CD8-positive, alpha-beta T cell (primary cell): ENCODE measurements at regions of chr20 and their contacts with region 1.

Region 1: GRCh38 chr20:62386383-62387218 is at the start of gene RPS21:
- DNase-seq: peak; percentile 86 to 97 (median 94)
- ATAC-seq: peak; percentile 88
- H3K4me3 ChIP-seq: peak within 1 kb of the TSS; percentile 93 to 96
- H3K4me3 Mint-ChIP-seq: peak within 1 kb of the TSS; percentile 91
- H3K27ac ChIP-seq: peak within 1 kb of the TSS; percentile 96 to 98
- H3K27ac Mint-ChIP-seq: peak within 1 kb of the TSS; percentile 95
- H3K4me1 ChIP-seq: peaks cover 37% of the 10 kb centered on the region
- H3K4me1 Mint-ChIP-seq: peaks cover 44% of the 10 kb centered on the region
- H3K27me3 ChIP-seq: no peaks in the 10 kb centered on the region
- H3K27me3 Mint-ChIP-seq: no peaks in the 10 kb centered on the region
- CTCF ChIP-seq: no peak
- total RNA-seq, gene RPS21: 3,441 to 3,445 TPM

Region 2: DNA sequence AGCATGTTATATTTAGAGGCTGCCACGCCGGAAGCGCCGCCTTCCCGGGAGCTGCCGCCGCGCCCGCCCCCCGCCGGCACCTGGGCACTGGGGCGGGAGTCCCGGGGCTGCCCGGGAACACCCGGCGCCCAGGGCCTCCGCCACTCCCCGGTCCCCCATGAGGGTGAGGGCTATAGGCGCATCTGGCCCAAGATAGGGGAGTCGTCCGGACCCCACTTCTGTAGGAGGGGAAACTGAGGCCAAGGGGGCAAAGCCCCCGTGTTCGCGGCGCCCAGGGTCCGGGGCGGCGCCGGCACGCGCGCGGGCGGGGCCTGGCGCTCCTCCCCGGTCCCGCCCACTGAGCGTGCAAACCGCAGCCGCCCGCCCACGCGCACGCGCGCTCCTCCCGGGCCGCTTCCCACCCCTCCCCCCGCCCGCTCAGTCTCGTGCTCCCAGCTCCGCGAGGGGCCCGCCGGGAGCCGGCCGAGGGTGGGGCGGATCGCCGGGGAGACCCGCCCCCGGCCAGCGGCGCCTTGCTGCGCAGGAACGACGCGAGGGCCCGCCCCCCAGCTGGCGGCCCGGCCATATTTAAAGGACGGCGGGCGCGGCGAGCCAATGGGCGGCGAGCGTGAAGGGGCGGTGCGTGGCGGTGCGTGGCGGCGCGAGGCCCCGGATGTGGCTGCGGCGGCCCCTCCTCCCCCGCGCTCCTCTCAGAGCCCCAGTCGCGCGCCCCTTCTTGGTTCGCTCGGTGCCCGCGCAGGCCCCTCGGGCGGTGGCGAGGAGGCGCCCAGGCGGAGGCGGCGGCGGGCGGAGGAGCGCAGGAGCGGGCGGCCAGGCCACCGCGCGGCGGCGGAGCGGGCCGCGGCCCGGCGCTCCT is 264.6 kb before region 1 on chr20 and contains the start of gene LSM14B:
- CTCF ChIA-PET with region 1: no interaction called
- POLR2A ChIA-PET with region 1: no interaction called
- intact Hi-C with region 1: loop called in 1 of 2 experiments (anchors 5 kb)
- DNase-seq: peak; percentile 92 to 99 (median 94)
- ATAC-seq: peak; percentile 76
- H3K4me3 ChIP-seq: peak within 1 kb of the TSS; percentile 55 to 86
- H3K4me3 Mint-ChIP-seq: peak within 1 kb of the TSS; percentile 85
- H3K27ac ChIP-seq: peak within 1 kb of the TSS; percentile 78 to 83
- H3K27ac Mint-ChIP-seq: peak within 1 kb of the TSS; percentile 90
- H3K4me1 ChIP-seq: peaks cover 57% of the 10 kb centered on the region
- H3K4me1 Mint-ChIP-seq: peaks cover 62% of the 10 kb centered on the region
- H3K27me3 ChIP-seq: no peaks in the 10 kb centered on the region
- H3K27me3 Mint-ChIP-seq: no peaks in the 10 kb centered on the region
- CTCF ChIP-seq: no peak
- total RNA-seq, gene LSM14B: 58.2 to 64.6 TPM

Region 3: GRCh38 chr20:62237801-62238571 is 148.6 kb before region 1 on chr20 and contains the start of gene OSBPL2:
- CTCF ChIA-PET with region 1: no interaction called
- POLR2A ChIA-PET with region 1: no interaction called
- intact Hi-C with region 1: loop called in 1 of 2 experiments (anchors 1 kb)
- DNase-seq: peak; percentile 100
- ATAC-seq: peak; percentile 98
- H3K4me3 ChIP-seq: peak within 1 kb of the TSS; percentile 54 to 58
- H3K4me3 Mint-ChIP-seq: peak within 1 kb of the TSS; percentile 84
- H3K27ac ChIP-seq: peak within 1 kb of the TSS; percentile 65 to 70
- H3K27ac Mint-ChIP-seq: peak within 1 kb of the TSS; percentile 95
- H3K4me1 ChIP-seq: peaks cover 24% of the 10 kb centered on the region
- H3K4me1 Mint-ChIP-seq: peaks cover 41% of the 10 kb centered on the region
- H3K27me3 ChIP-seq: no peaks in the 10 kb centered on the region
- H3K27me3 Mint-ChIP-seq: peaks cover 9% of the 10 kb centered on the region
- CTCF ChIP-seq: no peak
- total RNA-seq, gene OSBPL2: 63.6 to 64.2 TPM

Region 4: DNA sequence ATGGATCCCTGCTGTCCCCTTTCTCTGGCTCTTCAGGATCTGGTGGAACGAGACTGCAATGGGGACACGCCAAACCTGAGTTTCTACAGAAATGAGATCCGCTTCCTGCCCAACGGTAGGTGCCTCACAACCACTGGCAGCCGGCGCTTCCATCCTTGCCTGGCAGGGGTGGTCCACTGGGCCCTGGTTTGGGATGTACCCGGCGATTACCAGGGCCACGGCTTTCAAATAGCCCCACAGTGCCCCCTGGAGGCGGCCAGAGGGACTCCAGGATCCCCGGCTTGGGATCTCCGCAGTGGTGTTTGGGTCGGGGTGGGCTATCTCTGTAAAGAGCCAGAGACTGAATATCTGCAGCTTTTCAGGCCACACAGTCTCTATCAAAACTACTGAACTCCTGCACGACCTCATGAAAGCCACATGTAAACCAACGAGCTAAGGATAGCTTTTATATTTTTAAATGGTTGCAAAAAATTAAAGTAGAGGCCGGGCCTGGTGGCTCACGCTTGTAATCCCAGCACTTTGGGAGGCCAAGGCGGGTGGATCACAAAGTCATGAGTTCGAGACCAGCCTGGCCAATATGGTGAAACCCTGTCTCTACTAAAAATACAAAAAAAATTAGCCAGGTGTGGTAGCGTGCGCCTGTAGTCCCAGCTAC is 421.7 kb after region 1 on chr20:
- CTCF ChIA-PET with region 1: no interaction called
- POLR2A ChIA-PET with region 1: interaction called, 3 read pairs
- intact Hi-C with region 1: loop called in 1 of 2 experiments (anchors 5 kb)
- DNase-seq: peak; percentile 58 to 87 (median 78)
- ATAC-seq: peak; percentile 49
- H3K4me3 ChIP-seq: no peak overlapping the region
- H3K4me3 Mint-ChIP-seq: peak overlapping the region; percentile 50
- H3K27ac ChIP-seq: no peak overlapping the region
- H3K27ac Mint-ChIP-seq: peak overlapping the region; percentile 60
- H3K4me1 ChIP-seq: peaks cover 37% of the 10 kb centered on the region
- H3K4me1 Mint-ChIP-seq: peaks cover 29% of the 10 kb centered on the region
- H3K27me3 ChIP-seq: no peaks in the 10 kb centered on the region
- H3K27me3 Mint-ChIP-seq: no peaks in the 10 kb centered on the region
- CTCF ChIP-seq: peak; percentile 95

Region 5: DNA sequence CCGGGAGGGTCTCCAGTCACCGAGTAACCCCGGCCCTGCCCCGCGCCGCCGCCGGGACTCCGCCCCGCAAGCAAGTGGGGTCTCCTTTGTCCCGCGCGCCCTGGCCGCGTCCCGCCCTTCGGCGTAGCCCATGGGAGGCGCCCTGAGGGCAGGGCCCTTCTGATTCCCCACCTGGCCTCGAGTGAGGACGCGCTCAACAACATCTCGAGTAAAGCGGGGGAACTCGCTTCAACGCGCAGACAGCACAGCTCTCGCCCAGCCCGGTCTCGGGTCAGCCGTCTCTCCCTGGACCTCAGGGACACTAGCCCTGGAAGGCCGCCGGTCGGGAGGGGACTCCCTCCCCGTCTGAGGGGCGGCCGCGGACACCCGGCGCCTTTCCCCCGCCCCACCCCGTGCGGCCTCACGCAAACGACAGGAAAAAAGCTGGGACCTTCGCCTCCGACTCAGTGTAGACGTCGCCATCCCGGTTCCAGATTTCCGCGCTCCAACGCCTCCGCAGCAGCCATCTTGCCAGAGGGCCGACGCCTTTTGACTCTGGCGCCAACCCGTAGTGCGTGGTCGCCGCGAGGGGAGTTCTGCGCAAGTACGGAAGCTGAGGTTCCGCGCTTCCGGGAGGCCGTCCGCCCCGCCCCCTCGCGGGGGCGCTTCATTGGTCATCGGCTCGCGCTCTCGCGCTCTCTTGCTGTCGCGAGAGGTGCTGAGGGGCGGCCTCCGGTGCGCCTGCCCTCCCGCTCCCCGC is 550.9 kb after region 1 on chr20:
- CTCF ChIA-PET with region 1: no interaction called
- POLR2A ChIA-PET with region 1: no interaction called
- intact Hi-C with region 1: loop called in 1 of 2 experiments (anchors 10 kb)
- DNase-seq: peak; percentile 94 to 98 (median 97)
- ATAC-seq: peak; percentile 89
- H3K4me3 ChIP-seq: peak overlapping the region; percentile 96 to 99
- H3K4me3 Mint-ChIP-seq: peak overlapping the region; percentile 97
- H3K27ac ChIP-seq: peak overlapping the region; percentile 88 to 92
- H3K27ac Mint-ChIP-seq: peak overlapping the region; percentile 96
- H3K4me1 ChIP-seq: peaks cover 57% of the 10 kb centered on the region
- H3K4me1 Mint-ChIP-seq: peaks cover 36% of the 10 kb centered on the region
- H3K27me3 ChIP-seq: no peaks in the 10 kb centered on the region
- H3K27me3 Mint-ChIP-seq: no peaks in the 10 kb centered on the region
- CTCF ChIP-seq: no peak

Region 6: DNA sequence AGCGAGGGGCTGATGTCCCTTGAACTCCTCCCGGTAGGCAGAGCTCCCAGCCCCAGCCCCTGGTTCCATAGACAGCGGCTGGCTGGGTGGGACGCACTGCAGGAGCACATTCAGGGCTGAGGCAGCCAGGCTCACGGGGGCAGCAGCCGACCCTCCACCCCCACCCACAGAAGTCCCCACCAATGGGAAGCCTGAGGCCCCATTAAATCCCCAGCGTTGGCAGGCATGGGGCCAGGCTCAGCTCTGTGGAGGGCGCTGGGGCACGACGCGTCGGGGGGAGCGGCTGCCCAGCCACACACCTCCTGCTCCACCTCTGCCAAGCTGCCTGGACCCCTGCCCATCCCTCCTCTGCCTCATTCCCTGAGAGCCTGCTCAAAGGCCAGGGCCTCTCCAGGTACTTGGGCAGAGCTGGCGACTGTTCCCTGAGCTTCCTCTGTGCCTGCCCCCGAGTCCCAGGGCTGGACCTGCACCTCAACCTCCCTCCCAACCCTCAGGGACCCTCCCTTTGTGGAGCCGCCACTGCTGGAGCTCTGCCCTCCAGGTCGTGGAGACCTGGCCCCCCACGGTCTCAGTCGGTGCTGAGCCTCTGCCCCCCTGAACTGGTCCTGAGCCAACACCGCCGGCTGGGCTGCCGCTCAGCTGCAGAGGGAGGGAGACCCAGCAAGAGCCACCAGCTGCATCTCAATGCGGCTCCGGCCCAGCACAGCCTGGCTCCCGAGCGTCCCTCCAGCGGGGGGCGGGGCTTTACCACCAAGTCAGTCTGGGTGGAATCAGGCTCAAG is 965.4 kb after region 1 on chr20:
- CTCF ChIA-PET with region 1: no interaction called
- POLR2A ChIA-PET with region 1: no interaction called
- intact Hi-C with region 1: no loop called
- DNase-seq: no peak
- ATAC-seq: no peak
- H3K4me3 ChIP-seq: no peak overlapping the region
- H3K4me3 Mint-ChIP-seq: no peak overlapping the region
- H3K27ac ChIP-seq: no peak overlapping the region
- H3K27ac Mint-ChIP-seq: no peak overlapping the region
- H3K4me1 ChIP-seq: no peaks in the 10 kb centered on the region
- H3K4me1 Mint-ChIP-seq: no peaks in the 10 kb centered on the region
- H3K27me3 ChIP-seq: no peaks in the 10 kb centered on the region
- H3K27me3 Mint-ChIP-seq: peaks cover 5% of the 10 kb centered on the region
- CTCF ChIP-seq: no peak